PC-9 (cell line): ENCODE measurements at regions of chr11 and their contacts with region 1.

Region 1: GRCh38 chr11:65615229-65615941 is at the start of gene PCNX3:
- DNase-seq: peak; percentile 100
- H3K4me3 ChIP-seq: peak within 1 kb of the TSS; percentile 93
- H3K27ac ChIP-seq: peak within 1 kb of the TSS; percentile 64
- H3K4me1 ChIP-seq: peaks cover 27% of the 10 kb centered on the region; the same call in 1 of the 2 replicates
- H3K27me3 ChIP-seq: no peaks in the 10 kb centered on the region
- CTCF ChIP-seq: no peak
- total RNA-seq, gene PCNX3: 76.9 and 85.9 TPM in 2 replicates

Region 2: DNA sequence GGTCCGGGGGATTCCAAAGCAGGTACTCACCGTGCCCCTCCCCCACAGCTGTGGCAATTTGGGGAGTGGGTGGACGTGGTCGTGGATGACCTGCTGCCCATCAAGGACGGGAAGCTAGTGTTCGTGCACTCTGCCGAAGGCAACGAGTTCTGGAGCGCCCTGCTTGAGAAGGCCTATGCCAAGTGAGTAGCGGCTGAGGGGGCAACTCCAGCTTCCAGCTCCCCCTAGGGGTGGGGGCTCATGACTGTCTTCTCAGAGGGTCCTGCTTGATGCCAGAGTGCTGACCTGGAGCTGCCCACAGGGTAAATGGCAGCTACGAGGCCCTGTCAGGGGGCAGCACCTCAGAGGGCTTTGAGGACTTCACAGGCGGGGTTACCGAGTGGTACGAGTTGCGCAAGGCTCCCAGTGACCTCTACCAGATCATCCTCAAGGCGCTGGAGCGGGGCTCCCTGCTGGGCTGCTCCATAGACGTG is 429.5 kb before region 1 on chr11:
- CTCF ChIA-PET with region 1: no interaction called
- POLR2A ChIA-PET with region 1: no interaction called
- intact Hi-C with region 1: no loop called
- DNase-seq: no peak
- H3K4me3 ChIP-seq: no peak overlapping the region
- H3K27ac ChIP-seq: no peak overlapping the region
- H3K4me1 ChIP-seq: peaks cover 24% of the 10 kb centered on the region
- H3K27me3 ChIP-seq: no peaks in the 10 kb centered on the region
- CTCF ChIP-seq: no peak

Region 3: GRCh38 chr11:65524741-65525545 is 90.4 kb before region 1 on chr11 and contains the start of gene SCYL1:
- CTCF ChIA-PET with region 1: interaction called, 15 read pairs
- POLR2A ChIA-PET with region 1: no interaction called
- intact Hi-C with region 1: no loop called
- DNase-seq: peak in 1 of 2 experiments; percentile 82
- H3K4me3 ChIP-seq: peak within 1 kb of the TSS; percentile 100
- H3K27ac ChIP-seq: peak within 1 kb of the TSS; percentile 39; the same call in 1 of the 2 replicates
- H3K4me1 ChIP-seq: peaks cover 13% of the 10 kb centered on the region
- H3K27me3 ChIP-seq: no peaks in the 10 kb centered on the region
- CTCF ChIP-seq: no peak
- total RNA-seq, gene SCYL1: 106 and 135 TPM in 2 replicates

Region 4: DNA sequence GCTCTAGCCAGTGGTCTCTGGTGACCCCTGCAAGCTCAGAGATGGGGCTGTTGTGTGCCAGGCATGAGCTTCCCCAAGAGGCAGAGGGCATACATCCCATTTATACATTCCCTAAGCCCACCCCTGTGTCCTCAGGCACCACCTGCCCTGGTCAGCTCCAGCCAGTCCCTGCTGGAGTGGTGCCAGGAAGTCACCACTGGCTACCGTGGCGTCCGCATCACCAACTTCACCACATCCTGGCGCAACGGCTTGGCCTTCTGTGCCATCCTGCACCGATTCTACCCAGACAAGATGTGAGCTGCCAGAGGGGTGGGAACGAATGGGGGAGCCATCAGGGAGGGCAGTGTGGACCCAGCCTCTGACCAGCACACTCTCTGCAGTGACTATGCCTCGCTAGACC is 31.3 kb before region 1 on chr11:
- CTCF ChIA-PET with region 1: no interaction called
- POLR2A ChIA-PET with region 1: interaction called, 10 read pairs
- intact Hi-C with region 1: no loop called
- DNase-seq: no peak
- H3K4me3 ChIP-seq: no peak overlapping the region
- H3K27ac ChIP-seq: no peak overlapping the region
- H3K4me1 ChIP-seq: no peaks in the 10 kb centered on the region
- H3K27me3 ChIP-seq: no peaks in the 10 kb centered on the region
- CTCF ChIP-seq: no peak

Region 5: GRCh38 chr11:65662799-65663638 is 47.6 kb after region 1 on chr11 and contains the start of gene RELA:
- CTCF ChIA-PET with region 1: no interaction called
- POLR2A ChIA-PET with region 1: interaction called, 8 read pairs
- intact Hi-C with region 1: loop called (anchors 1 kb)
- DNase-seq: peak; percentile 76 to 98
- H3K4me3 ChIP-seq: peak within 1 kb of the TSS; percentile 99
- H3K27ac ChIP-seq: peak within 1 kb of the TSS; percentile 80
- H3K4me1 ChIP-seq: peaks cover 20% of the 10 kb centered on the region
- H3K27me3 ChIP-seq: no peaks in the 10 kb centered on the region
- CTCF ChIP-seq: no peak
- total RNA-seq, gene RELA: 59.5 and 86.8 TPM in 2 replicates

Region 6: GRCh38 chr11:65810046-65810868 is 194.9 kb after region 1 on chr11:
- CTCF ChIA-PET with region 1: interaction called, 7 read pairs
- POLR2A ChIA-PET with region 1: interaction called, 13 read pairs
- intact Hi-C with region 1: no loop called
- DNase-seq: no peak
- H3K4me3 ChIP-seq: no peak overlapping the region
- H3K27ac ChIP-seq: no peak overlapping the region
- H3K4me1 ChIP-seq: no peaks in the 10 kb centered on the region
- H3K27me3 ChIP-seq: no peaks in the 10 kb centered on the region
- CTCF ChIP-seq: no peak

Region 7: GRCh38 chr11:67558084-67558781 is 1942.8 kb after region 1 on chr11:
- CTCF ChIA-PET with region 1: no interaction called
- POLR2A ChIA-PET with region 1: interaction called, 22 read pairs
- intact Hi-C with region 1: no loop called
- DNase-seq: no peak
- H3K4me3 ChIP-seq: no peak overlapping the region
- H3K27ac ChIP-seq: no peak overlapping the region
- H3K4me1 ChIP-seq: peaks cover 14% of the 10 kb centered on the region
- H3K27me3 ChIP-seq: no peaks in the 10 kb centered on the region
- CTCF ChIP-seq: no peak